ENCODE measurements at regions of chr15 and their contacts with region 1.

Region 1: GRCh38 chr15:78859971-78860732 is 12.5 kb upstream of the MORF4L1 start:
- DNase-seq: peak; percentile 83 to 93 (median 91)
- H3K4me3 ChIP-seq: peak overlapping the region; percentile 29 to 90 (median 75)
- H3K27ac ChIP-seq: no peak overlapping the region
- H3K4me1 ChIP-seq: peaks cover 0 to 5% (median under 1%) of the 10 kb centered on the region in 4 experiments
- H3K27me3 ChIP-seq: no peaks in the 10 kb centered on the region

Region 2: DNA sequence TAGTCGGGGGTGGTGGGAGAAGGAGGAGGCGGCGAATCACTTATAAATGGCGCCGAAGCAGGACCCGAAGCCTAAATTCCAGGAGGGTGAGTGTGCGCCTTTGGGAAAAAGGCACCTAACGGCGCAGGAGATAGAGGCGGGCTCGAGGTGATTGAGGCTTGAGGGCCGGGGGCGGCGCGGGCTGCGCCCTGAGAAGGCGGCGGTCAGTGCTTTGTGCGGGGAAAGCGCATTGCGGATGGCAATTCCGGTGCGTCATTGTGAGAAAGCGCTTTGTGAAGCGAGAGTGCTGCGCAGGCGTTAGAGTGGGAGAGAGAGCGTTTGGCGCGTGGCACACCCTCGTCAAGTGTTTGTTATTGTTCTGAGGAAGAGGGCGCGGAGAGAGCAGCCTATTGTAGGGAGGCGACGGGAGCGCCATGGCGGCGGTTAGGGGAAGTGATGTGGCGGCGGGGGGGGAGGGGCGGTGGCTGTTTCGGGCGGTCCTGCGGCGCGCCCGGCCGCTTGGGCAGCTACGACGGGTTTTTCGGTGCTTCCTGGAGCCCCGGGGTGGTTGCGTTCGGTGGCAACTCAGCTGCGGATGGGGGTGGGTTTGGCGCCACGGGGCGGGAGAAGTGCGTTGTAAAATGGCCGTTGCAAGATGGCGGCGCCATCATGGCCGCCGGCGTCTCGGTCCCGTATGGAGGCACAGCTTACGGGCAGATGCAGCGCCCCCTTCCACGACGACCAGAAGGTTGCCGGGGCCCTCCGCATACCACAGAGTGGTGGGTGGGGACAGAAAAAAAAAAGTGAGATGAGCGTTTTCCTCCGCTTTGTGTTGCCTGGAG is 13.0 kb after region 1 on chr15:
- CTCF ChIA-PET with region 1: no interaction called
- POLR2A ChIA-PET with region 1: interaction called, 11 read pairs
- DNase-seq: peak; percentile 96 to 98 (median 96)
- H3K4me3 ChIP-seq: peak overlapping the region; percentile 66 to 100 (median 99)
- H3K27ac ChIP-seq: peak overlapping the region; percentile 100
- H3K4me1 ChIP-seq: peaks cover 14 to 37% (median 24%) of the 10 kb centered on the region in 4 experiments
- H3K27me3 ChIP-seq: no peaks in the 10 kb centered on the region

Measured in common myeloid progenitor, CD34-positive (primary cell).